HAP-1 (cell line): ENCODE measurements at regions of chr3 and their contacts with region 1.

Region 1: DNA sequence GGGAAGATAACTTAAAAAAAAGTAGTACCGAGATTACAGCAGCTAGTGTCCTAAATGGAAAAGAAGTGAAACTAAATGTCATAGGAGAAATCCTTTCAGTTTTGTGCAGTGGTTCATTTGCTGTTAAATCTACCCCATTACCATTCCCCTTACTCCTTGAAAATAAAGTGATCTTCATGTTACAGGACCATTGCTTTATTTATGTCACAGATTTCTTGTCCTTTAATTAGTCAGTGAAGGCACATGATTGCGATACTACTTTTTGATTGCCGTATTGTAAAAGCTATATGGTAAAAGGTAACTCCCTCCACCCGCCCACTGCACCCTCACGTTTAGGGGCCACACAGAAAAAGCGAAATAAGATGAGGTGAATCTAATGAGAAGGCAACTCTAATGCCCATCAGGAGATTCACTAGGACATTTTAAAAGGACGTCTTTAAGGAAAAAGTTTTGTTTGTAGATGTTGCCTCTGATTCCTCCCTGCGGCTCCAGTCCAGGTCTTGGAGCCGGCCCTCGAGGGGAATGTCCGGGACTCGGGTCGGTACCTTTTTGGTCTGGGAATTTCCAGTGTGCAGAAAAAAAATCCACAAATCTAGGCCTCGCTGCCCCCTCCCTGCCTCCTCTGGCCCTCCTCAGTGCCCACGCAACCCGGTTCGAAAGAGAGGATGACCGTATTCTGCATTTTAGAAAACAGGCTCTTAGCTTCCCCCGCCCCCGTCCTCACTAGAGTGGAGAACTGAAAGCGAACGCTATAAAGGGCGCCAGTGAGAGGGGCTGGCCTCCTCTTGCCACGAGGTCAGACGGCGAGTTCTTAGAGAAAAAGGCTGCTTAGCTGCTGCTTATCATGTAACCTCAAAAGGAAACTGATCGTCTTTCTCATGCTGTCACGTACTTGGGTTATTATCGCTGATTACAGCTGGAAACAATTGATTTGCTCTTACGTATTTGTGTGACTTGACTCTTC is 21.8 kb upstream of the NFKBIZ start:
- DNase-seq: peak; percentile 64 to 79
- H3K4me3 ChIP-seq: peak overlapping the region; percentile 33
- H3K4me1 ChIP-seq: peaks cover 19% of the 10 kb centered on the region
- H3K27me3 ChIP-seq: no peaks in the 10 kb centered on the region

Region 2: DNA sequence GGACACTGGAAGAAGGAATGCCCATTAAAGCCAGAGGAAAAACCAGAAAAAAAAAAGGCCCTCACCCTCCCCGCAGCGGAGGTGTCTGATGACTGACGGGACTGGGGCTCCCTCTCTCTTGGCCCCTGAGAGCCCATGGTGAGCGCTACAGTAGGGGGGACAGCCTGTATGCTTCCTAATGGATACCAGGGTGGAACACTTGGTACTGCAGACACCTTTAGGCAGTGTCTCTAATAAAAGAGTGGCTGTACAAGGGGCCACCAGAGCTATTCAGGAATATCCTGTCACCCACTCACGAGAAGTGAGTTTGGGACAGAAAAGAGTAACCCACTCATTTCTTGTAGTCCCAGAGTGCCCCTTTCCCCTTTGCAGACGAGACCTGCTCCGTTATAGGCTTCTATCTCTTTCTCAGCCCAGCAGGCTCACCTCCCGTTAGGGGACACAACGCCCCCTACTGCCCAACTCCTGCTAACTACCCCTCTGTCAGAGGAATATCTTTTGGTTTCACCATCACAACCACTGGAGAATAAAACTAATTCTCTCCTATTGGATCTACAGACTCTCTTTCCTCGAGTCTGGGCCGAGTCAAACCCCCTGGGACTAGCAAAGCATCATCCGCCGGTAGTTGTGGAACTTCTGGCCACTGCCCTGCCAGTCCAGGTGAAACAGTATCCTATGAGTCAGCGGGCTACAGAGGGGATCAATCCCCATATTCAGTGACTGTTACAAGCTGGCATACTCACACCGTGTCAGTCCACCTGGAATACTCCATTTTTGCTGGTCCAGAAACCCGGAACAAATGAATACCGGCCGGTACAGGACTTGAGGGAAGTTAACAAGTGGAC is 191.3 kb before region 1 on chr3:
- in situ Hi-C with region 1: no loop called
- DNase-seq: peak; percentile 52 to 89
- H3K4me3 ChIP-seq: no peak overlapping the region
- H3K4me1 ChIP-seq: peaks cover 3% of the 10 kb centered on the region; the same call in 1 of the 2 replicates
- H3K27me3 ChIP-seq: no peaks in the 10 kb centered on the region

Region 3: GRCh38 chr3:101724329-101725193 is 102.9 kb before region 1 on chr3 and contains the start of gene CEP97:
- in situ Hi-C with region 1: no loop called
- DNase-seq: peak; percentile 93 to 94
- H3K4me3 ChIP-seq: peak within 1 kb of the TSS; percentile 53
- H3K4me1 ChIP-seq: peaks cover 32% of the 10 kb centered on the region
- H3K27me3 ChIP-seq: no peaks in the 10 kb centered on the region

Region 4: GRCh38 chr3:102124301-102125158 is 297.0 kb after region 1 on chr3:
- in situ Hi-C with region 1: no loop called
- DNase-seq: no peak
- H3K4me3 ChIP-seq: no peak overlapping the region
- H3K4me1 ChIP-seq: no peaks in the 10 kb centered on the region
- H3K27me3 ChIP-seq: no peaks in the 10 kb centered on the region

Region 5: GRCh38 chr3:102141096-102141927 is 313.8 kb after region 1 on chr3:
- in situ Hi-C with region 1: no loop called
- DNase-seq: no peak
- H3K4me3 ChIP-seq: no peak overlapping the region
- H3K4me1 ChIP-seq: no peaks in the 10 kb centered on the region
- H3K27me3 ChIP-seq: no peaks in the 10 kb centered on the region

Region 6: DNA sequence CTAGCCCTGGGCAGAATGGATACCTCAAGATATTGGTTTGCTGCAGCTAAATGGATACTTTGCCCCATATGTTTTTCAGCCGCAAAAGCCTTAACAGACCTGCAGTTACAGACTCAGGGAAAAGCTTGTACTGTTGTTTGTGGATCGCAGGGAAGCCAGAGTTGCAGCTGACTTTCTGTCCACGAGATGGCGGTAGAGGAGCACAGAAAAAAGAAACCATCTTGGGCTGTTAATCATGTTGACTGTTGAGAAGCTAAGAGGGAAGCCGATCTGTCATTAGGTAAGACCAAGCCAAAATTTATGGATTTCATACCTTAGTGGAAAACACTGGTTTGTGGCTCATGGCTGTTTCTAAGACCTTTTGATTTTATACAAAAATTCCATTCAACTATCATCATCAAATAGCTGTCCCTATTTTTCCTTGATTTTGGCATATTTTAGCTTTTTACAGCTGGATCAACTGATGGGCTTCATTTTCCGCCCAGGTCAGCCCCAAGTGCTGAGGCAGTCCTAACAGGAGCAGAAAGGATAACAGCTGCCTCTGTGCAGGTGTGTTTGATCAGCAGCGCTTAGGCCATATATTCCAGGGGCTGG is 401.7 kb after region 1 on chr3:
- in situ Hi-C with region 1: loop called (anchors 10 kb)
- DNase-seq: peak; percentile 29 to 75
- H3K4me3 ChIP-seq: no peak overlapping the region
- H3K4me1 ChIP-seq: no peaks in the 10 kb centered on the region
- H3K27me3 ChIP-seq: peaks cover 10% of the 10 kb centered on the region